Ovary (tissue), 10 donors: ENCODE measurements at regions of chr10 and their contacts with region 1.

Region 1: DNA sequence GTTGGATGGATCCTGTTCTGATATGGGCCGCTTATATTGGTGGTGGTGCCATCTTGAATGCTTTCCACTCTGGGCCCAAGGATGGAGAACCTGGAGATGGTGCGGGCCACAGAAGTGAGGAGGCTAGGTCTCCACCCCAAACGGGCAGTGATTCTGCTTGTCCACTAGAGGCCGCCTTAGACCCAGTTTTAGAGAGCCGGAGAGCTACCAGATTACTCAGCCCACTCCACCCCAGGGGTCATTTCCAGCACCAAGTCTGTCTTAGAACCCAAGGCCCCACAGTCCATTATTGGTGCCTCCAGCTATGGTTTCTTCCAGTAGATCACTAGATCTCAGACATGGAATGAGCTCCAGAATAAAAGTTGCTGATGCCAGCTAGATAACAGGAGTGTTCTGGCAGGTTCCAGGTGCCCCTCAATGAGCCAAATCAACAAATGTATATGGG is 11.8 kb upstream of the CAMK2G start:
- DNase-seq: peak; percentile 70 to 78 (median 74)
- H3K4me3 ChIP-seq: no peak overlapping the region
- H3K27ac ChIP-seq: no peak overlapping the region
- H3K4me1 ChIP-seq: peaks cover 7% of the 10 kb centered on the region
- H3K27me3 ChIP-seq: no peaks in the 10 kb centered on the region
- CTCF ChIP-seq: peak; percentile 46 to 85 (median 83)
- EP300 ChIP-seq: no peak
- POLR2A ChIP-seq: no peak

Region 2: DNA sequence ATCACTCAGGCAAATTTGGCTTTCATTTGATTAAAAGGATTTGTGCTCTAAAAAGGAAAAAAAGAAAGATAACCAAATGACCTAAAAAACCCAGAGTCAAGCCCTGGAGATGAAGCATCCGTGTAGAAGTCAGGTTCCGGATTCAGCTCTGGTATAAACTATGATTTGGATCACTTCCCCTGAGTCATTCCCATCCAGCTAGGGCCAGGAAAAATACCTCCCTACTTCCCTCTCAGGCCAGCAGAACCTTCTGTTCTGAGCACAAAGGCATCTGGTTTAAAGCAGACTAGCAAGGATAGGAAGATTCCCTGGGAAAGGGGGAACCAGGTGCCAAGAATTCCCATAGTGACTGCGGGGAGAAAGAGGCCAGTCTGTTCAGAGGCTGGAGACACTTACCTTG is 49.0 kb before region 1 on chr10:
- intact Hi-C with region 1: no loop called
- DNase-seq: no peak
- H3K4me3 ChIP-seq: no peak overlapping the region
- H3K27ac ChIP-seq: no peak overlapping the region
- H3K4me1 ChIP-seq: no peaks in the 10 kb centered on the region
- H3K27me3 ChIP-seq: no peaks in the 10 kb centered on the region
- CTCF ChIP-seq: no peak
- EP300 ChIP-seq: no peak
- POLR2A ChIP-seq: no peak

Region 3: DNA sequence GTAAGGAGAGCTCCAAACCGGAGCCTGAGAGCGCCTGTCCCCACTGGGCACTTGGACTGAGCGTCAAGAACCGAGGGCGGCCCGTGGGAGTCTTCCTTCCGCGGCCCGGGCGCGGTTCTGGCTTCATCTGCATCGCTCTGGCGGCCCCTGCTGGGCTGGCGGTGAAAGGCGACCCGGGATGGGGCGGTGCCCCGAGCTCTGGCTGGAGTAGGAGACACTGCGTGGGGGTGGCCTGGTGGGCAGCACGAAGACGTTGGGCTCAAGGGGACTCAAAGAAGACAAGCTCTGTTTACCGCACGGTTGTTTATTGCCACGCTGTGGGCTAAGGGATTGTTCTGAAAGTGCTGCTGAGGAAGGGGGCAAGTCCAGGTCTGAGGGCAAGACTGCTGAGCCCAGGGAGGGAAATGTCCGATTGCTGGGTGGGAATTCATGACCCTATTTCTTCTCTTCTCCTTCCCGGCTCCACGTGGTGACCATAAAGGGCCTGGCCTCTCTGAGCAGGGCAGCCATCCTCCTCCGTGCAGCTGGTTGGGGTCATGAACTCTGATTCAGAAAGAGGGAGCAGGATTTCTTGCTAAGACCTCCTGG is 54.6 kb after region 1 on chr10:
- intact Hi-C with region 1: loop called (anchors 2 to 5 kb)
- DNase-seq: peak; percentile 82 to 92 (median 86)
- H3K4me3 ChIP-seq: no peak overlapping the region
- H3K27ac ChIP-seq: peak overlapping the region in 1 of 2 donors; percentile 28
- H3K4me1 ChIP-seq: no peaks in the 10 kb centered on the region
- H3K27me3 ChIP-seq: no peaks in the 10 kb centered on the region
- CTCF ChIP-seq: peak; percentile 84 to 95 (median 95)
- EP300 ChIP-seq: no peak
- POLR2A ChIP-seq: no peak

Region 4: DNA sequence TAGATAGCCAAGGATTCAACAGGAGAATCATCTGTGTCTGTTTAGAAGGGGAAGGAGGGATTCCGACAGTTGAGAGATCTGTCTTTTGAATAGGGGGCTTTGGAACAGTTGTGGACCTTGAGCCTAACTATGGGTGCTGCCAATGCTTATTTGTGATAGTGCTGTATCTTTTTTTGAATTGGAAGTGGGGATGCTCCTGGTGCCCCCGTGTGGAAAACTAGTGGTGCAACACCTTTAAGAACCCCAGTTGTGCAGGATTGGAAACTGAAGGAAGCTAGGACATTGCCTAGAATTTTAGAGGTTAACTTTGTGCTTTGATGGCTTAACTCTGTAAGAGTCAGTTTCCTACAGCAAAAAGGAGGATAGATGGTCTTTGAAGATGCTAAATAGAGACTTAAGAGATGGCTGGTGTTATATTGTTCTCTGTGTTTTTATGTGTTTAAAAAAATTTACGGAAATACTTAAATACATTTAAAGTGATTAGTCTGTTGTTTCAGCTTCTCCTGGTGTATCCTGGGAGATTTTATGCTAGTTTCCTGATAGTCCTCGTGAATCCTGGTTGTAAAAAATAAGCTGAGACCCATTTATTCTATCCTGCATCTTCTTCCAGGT is 195.2 kb after region 1 on chr10:
- intact Hi-C with region 1: loop called in 3 of 4 experiments (anchors 5 kb)
- DNase-seq: peak in 3 of 5 donors; percentile 32 to 53 (median 44)
- H3K4me3 ChIP-seq: no peak overlapping the region
- H3K27ac ChIP-seq: no peak overlapping the region
- H3K4me1 ChIP-seq: no peaks in the 10 kb centered on the region
- H3K27me3 ChIP-seq: no peaks in the 10 kb centered on the region
- CTCF ChIP-seq: peak; percentile 41 to 70 (median 57)
- EP300 ChIP-seq: no peak
- POLR2A ChIP-seq: no peak

Region 5: DNA sequence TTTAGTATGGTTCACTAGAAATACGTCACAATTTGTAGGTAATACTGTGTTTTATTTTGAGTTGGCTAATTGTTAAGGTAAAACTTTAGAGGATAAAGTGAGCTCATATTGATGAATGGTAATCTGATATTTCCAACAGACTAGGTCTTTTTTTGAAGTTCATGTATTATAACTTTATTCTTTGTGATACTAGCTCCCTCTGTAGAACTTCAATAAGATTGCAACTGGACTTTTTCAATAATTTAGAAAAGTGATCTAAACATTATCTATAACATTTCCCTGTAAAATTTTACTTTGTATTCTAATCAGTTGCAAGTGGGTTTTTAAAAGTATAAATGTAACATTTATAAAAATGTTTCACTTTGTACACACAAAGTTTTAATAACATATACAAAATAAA is 348.5 kb after region 1 on chr10:
- intact Hi-C with region 1: loop called in 1 of 4 experiments (anchors 5 kb)
- DNase-seq: no peak
- H3K4me3 ChIP-seq: no peak overlapping the region
- H3K27ac ChIP-seq: no peak overlapping the region
- H3K4me1 ChIP-seq: no peaks in the 10 kb centered on the region
- H3K27me3 ChIP-seq: no peaks in the 10 kb centered on the region
- CTCF ChIP-seq: no peak
- EP300 ChIP-seq: no peak
- POLR2A ChIP-seq: no peak